Activated CD4-positive, alpha-beta memory T cell treated with anti-CD3 and anti-CD28 coated beads, Interleukin-2, amount 10 ng/mL, durations not matched to agents 7 days and 5 days (primary cell): ENCODE measurements at regions of chr19 and their contacts with region 1.

Region 1: DNA sequence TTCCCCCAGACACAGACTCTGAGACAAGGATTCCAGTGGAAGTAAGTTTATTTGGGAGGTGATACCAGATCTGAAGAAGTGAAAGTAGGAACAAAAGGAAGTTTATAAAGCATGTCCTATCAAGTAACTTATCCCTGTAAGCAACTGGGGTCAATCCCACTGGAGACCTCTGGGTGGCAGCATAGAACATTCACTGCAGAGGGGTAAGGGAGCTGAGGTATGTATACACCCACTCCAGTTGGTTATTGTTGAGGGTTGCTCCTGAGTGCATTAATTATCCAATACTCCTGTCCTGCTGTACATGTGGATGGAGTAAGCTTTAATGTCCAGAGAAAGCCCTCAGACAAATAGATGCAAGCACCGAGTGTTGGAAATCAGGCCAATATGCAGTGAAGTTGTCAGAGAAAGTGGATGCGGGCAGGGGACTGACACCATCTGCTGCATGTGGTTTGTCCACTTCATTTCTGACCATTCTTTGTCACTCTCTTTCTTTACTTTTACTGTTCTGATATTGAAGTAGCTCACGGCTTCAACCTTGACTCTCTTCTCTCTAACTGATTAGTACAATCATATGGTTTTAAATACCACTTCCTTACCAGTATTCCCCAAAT is 46.7 kb downstream of the NOTCH3 start:
- DNase-seq: peak; percentile 44
- H3K4me3 Mint-ChIP-seq: no peak overlapping the region
- H3K27ac Mint-ChIP-seq: no peak overlapping the region
- H3K4me1 Mint-ChIP-seq: no peaks in the 10 kb centered on the region
- H3K27me3 Mint-ChIP-seq: peaks cover 4% of the 10 kb centered on the region

Region 2: GRCh38 chr19:15091901-15092753 is 62.0 kb before region 1 on chr19:
- CTCF ChIA-PET with region 1: interaction called, 19 read pairs
- POLR2A ChIA-PET with region 1: no interaction called
- DNase-seq: peak; percentile 37
- H3K4me3 Mint-ChIP-seq: no peak overlapping the region
- H3K27ac Mint-ChIP-seq: no peak overlapping the region
- H3K4me1 Mint-ChIP-seq: peaks cover 4% of the 10 kb centered on the region
- H3K27me3 Mint-ChIP-seq: peaks cover 3% of the 10 kb centered on the region

Region 3: GRCh38 chr19:15101479-15102082 is 52.5 kb before region 1 on chr19:
- CTCF ChIA-PET with region 1: interaction called, 13 read pairs
- POLR2A ChIA-PET with region 1: interaction called, 3 read pairs
- DNase-seq: peak; percentile 63
- H3K4me3 Mint-ChIP-seq: no peak overlapping the region
- H3K27ac Mint-ChIP-seq: no peak overlapping the region
- H3K4me1 Mint-ChIP-seq: peaks cover 4% of the 10 kb centered on the region
- H3K27me3 Mint-ChIP-seq: peaks cover 15% of the 10 kb centered on the region

Region 4: GRCh38 chr19:15187026-15188007 is 33.2 kb after region 1 on chr19:
- CTCF ChIA-PET with region 1: no interaction called
- POLR2A ChIA-PET with region 1: no interaction called
- DNase-seq: no peak
- H3K4me3 Mint-ChIP-seq: no peak overlapping the region
- H3K27ac Mint-ChIP-seq: no peak overlapping the region
- H3K4me1 Mint-ChIP-seq: no peaks in the 10 kb centered on the region
- H3K27me3 Mint-ChIP-seq: no peaks in the 10 kb centered on the region